Esophagus muscularis mucosa (tissue), 4 donors: ENCODE measurements at regions of chr16 and their contacts with region 1.

Region 1: DNA sequence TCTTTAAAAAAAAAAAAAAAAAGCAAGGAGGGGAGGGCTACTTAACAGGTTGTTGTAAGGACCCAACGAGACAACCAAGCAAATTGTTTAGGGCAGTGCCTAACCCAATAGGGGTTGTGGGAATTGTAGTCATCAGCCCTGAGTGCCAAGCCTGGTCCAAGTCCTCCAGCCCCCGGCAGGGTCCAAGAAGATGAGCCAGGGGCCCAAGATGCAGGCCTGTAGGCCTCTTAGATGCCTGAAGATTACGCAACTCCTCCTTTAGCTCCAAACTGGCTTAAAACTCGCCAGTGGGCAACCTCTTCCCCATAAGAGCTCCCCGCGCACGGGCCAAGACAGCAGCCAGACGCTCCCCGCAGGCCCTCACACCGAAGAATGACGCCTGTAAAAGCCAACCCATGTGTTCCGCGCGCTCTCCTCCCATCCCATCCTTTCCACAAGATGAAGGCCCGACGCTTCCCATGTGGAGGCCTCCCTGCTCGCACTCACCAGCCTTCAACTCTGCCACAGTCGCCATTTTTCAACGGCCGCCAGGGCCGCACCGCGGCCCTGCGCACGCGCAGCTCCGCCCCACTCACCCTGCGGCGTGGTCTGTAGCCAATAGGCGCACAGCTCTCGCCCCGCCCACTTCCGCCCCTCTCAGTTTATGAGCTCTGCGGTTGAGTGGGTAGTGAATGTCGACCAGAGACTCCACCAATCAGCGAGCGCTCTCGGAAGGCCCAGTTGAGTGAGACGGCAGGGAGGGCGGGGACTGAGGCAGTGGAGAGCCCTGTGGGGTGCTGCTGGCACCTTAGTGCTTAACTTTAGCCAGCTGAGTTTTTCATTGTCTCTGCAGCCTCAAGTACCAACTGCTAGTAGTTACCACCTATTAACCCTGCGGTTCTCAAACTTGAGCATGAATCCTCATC is at the start of gene CEP20:
- DNase-seq: peak; percentile 100
- H3K4me3 ChIP-seq: peak within 1 kb of the TSS; percentile 76 to 89 (median 88)
- H3K27ac ChIP-seq: peak within 1 kb of the TSS; percentile 82 to 95 (median 90)
- H3K4me1 ChIP-seq: peaks cover 21 to 55% (median 53%) of the 10 kb centered on the region in 4 donors
- H3K27me3 ChIP-seq: no peaks in the 10 kb centered on the region
- CTCF ChIP-seq: peak; percentile 9 to 51 (median 31)
- EP300 ChIP-seq: no peak
- POLR2A ChIP-seq: peak; percentile 41
- total RNA-seq, gene CEP20: 25.2 to 36.1 (median 32.0) TPM

Region 2: DNA sequence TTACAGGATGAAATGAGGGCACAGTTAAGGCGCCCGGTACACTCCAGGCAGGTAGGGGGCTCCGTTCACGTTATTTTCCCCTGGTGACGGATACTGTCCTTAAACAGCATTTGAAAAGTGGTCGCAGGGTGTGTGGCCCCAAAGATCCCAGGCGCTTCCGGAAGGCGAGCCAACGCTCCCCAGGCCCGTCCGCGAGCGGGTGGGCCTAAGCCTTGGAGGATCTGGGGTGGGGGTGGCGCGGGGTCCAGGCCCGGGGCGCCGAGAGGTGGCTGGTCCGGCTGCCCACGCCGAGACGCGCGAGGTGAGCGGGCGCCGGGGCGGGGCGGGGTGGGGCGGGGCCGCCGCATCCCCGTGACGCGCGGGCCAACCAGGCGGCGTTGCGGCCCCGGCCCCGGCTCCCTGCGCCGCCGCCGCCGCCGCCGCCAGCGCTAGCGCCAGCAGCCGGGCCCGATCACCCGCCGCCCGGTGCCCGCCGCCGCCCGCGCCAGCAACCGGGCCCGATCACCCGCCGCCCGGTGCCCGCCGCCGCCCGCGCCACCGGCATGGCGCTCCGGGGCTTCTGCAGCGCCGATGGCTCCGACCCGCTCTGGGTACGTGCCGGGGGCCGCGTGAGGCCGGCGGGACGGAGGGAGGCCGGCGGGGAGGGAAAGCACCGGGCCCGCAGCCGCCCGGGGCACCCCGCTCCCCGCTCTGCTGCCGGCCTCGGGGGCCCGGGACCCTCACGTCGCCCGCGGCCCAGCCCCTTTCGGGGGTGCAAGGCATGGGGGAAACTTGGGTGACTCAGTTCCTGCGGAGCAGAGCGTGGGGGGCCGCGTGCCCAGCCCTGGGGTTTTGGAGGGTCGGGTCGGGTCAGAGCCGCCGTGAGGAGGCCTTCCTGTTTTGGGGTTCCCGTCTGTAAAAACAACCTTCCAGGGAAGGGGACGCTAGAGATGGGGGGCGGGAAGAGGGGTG is 61.2 kb after region 1 on chr16 and contains the start of gene ABCC1:
- intact Hi-C with region 1: loop called (anchors 5 kb)
- DNase-seq: no peak
- H3K4me3 ChIP-seq: peak within 1 kb of the TSS; percentile 93 to 99 (median 94)
- H3K27ac ChIP-seq: peak within 1 kb of the TSS; percentile 93 to 98 (median 95)
- H3K4me1 ChIP-seq: peaks cover 24 to 60% (median 50%) of the 10 kb centered on the region in 4 donors
- H3K27me3 ChIP-seq: no peaks in the 10 kb centered on the region
- CTCF ChIP-seq: peak in 1 of 3 experiments; percentile 26
- EP300 ChIP-seq: no peak
- POLR2A ChIP-seq: no peak
- total RNA-seq, gene ABCC1: 61.8 to 141 (median 103) TPM

Region 3: GRCh38 chr16:16014329-16015144 is 126.2 kb after region 1 on chr16:
- intact Hi-C with region 1: loop called (anchors 10 kb)
- DNase-seq: no peak
- H3K4me3 ChIP-seq: no peak overlapping the region
- H3K27ac ChIP-seq: peak overlapping the region; percentile 77 to 84 (median 82)
- H3K4me1 ChIP-seq: peaks cover 28 to 92% (median 71%) of the 10 kb centered on the region in 4 donors
- H3K27me3 ChIP-seq: no peaks in the 10 kb centered on the region
- CTCF ChIP-seq: no peak
- EP300 ChIP-seq: no peak
- POLR2A ChIP-seq: no peak